ENCODE measurements at regions of chr1 and their contacts with region 1.

Region 1: DNA sequence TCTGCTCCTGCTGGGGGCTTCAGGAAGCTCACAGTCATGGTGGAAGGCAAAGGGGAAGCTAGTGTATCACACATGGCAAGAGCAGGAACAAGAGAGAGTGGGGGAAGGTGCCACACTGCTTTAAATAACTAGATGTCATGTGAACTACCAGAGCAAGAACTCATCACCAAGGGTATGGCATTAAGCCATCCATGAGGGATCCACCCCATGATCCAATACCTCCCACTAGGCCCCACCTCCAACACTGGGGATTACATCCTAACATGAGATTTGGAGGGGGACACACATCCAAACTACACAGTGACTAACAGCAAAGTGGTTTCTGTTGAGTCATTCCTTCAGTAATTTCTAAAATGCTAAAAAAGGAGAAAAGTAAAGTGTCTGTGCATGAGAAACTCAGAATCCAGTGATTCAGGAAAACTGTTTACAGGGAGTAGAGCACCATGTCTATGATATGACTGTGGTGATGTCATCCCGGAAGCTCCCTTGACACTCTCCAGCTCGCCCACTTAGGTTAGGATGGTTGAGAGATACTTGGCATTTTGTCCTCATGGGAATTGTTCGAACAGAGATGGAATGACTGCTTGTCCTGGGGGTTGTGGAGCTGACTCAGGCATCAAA is 50.3 kb downstream of the CHD1L start:
- DNase-seq: peak; percentile 96
- H3K4me3 ChIP-seq: peak overlapping the region; percentile 13
- CTCF ChIP-seq: no peak

Region 2: DNA sequence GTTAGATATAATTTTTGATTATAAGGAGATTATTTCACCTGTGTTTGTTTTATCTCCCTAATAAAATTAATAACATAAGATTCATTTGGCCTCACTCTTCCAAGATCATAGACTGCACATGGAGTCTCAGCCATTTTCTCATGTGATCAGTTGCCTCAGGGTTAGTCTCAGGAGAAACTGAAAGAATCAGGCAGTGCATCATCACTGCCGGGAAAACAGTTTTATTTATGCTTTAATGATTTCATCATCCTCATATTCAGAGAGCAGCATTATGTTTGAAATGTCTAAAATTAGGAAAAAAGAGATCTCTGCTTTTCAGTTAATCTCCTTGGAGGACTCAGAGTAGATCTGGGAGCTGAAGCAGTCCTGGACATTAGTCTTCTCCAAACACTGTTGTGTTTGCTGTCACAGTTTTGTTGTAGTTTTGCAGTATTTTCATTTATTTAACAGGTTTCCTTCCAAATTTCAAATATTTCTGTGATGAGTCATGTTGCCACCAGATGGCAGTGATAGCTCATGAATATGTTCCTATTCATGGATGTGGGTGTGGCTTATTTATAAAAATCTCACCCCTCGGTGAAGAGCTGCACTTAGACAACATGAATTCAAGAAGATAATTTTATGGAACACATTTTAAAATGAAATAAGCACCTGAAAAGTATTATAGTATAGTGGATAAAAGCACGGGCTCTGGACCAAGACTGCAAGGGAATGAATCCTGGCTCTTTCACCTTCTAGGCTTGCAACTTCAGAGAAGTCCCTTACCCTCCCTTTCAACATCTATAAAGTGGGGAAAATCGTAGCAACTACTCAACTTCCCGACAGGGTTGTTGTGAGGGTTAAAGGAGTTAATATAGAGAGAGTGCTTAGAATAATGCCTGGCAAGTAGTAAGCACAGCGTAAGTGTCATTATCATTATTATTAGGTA is 19.1 kb before region 1 on chr1:
- CTCF ChIA-PET with region 1: interaction called, 12 read pairs
- POLR2A ChIA-PET with region 1: interaction called, 3 read pairs
- DNase-seq: peak; percentile 42
- H3K4me3 ChIP-seq: no peak overlapping the region; the same call in 1 of the 2 replicates
- CTCF ChIP-seq: peak; percentile 26

Region 3: GRCh38 chr1:147723691-147724323 is 431.1 kb after region 1 on chr1:
- CTCF ChIA-PET with region 1: no interaction called
- POLR2A ChIA-PET with region 1: no interaction called
- DNase-seq: no peak
- H3K4me3 ChIP-seq: no peak overlapping the region
- CTCF ChIP-seq: no peak

Measured in AG04449 (cell line).